T-cell (primary cell): ENCODE measurements at regions of chr19 and their contacts with region 1.

Region 1: GRCh38 chr19:17522988-17523872 is 11.8 kb downstream of the PGLS start:
- DNase-seq: peak; percentile 12 to 69 (median 38)
- ATAC-seq: peak; percentile 78 to 94 (median 87)
- H3K4me3 ChIP-seq: peak overlapping the region in 1 of 2 donors; percentile 17
- H3K4me3 Mint-ChIP-seq: peak overlapping the region; percentile 50 to 85 (median 64)
- H3K27ac ChIP-seq: peak overlapping the region; percentile 70
- H3K27ac Mint-ChIP-seq: peak overlapping the region; percentile 94 to 97
- H3K4me1 ChIP-seq: peaks cover 8 to 32% of the 10 kb centered on the region in 2 experiments
- H3K4me1 Mint-ChIP-seq: peaks cover 20 to 36% (median 28%) of the 10 kb centered on the region in 3 donors
- H3K27me3 ChIP-seq: peaks cover 0 to 18% of the 10 kb centered on the region in 2 experiments
- H3K27me3 Mint-ChIP-seq: no peaks in the 10 kb centered on the region

Region 2: GRCh38 chr19:17409990-17410389 is 113.2 kb before region 1 on chr19:
- CTCF ChIA-PET with region 1: no interaction called
- POLR2A ChIA-PET with region 1: interaction called in 1 of 2 experiments, 11 read pairs
- DNase-seq: no peak
- ATAC-seq: no peak
- H3K4me3 ChIP-seq: no peak overlapping the region
- H3K4me3 Mint-ChIP-seq: no peak overlapping the region
- H3K27ac ChIP-seq: no peak overlapping the region
- H3K27ac Mint-ChIP-seq: no peak overlapping the region
- H3K4me1 ChIP-seq: peaks cover 9 to 30% of the 10 kb centered on the region in 2 experiments
- H3K4me1 Mint-ChIP-seq: peaks cover 26 to 40% (median 26%) of the 10 kb centered on the region in 3 donors
- H3K27me3 ChIP-seq: no peaks in the 10 kb centered on the region
- H3K27me3 Mint-ChIP-seq: no peaks in the 10 kb centered on the region

Region 3: DNA sequence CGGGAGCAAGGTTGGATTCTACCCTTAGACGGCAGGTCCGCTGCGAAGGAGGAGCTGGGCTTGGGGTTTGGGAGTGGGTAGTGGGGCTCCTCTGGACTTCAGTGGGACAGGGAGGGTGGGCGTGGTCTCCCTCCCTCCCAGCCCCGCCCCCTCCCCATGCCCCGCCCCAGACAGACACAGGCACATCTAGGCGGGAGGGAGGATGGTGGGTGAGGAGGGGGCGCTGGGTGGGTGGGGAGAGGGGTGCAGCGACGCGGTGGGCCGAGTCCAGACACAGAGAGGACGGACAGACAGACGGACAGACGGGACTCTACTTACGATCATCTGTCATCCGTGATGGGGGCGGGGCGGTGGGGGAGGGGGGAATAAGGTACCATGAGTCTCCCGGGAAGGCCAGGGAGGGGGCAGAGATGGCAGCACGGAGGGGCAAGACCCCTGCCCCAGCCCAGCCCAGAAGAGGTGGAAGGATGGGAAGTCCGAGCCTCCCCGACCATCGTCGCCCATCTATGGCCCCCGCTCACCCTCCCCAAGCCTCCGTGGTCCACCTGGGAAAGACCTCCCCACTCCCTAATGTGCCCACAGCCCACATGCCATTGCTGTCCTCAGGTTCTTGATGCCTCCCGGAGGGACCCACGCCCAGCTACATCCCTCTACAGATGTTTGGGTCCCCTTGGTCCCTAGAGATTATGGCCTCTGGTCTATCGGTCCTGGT is 100.2 kb after region 1 on chr19:
- CTCF ChIA-PET with region 1: no interaction called
- POLR2A ChIA-PET with region 1: no interaction called
- DNase-seq: no peak
- ATAC-seq: no peak
- H3K4me3 ChIP-seq: no peak overlapping the region
- H3K4me3 Mint-ChIP-seq: no peak overlapping the region
- H3K27ac ChIP-seq: no peak overlapping the region
- H3K27ac Mint-ChIP-seq: no peak overlapping the region
- H3K4me1 ChIP-seq: no peaks in the 10 kb centered on the region
- H3K4me1 Mint-ChIP-seq: peaks cover 0 to 10% (median 0%) of the 10 kb centered on the region in 3 donors
- H3K27me3 ChIP-seq: peaks cover 0 to 38% of the 10 kb centered on the region in 2 experiments
- H3K27me3 Mint-ChIP-seq: peaks cover 7 to 12% of the 10 kb centered on the region in 2 donors